ENCODE measurements at regions of chr5 and their contacts with region 1.

Region 1: DNA sequence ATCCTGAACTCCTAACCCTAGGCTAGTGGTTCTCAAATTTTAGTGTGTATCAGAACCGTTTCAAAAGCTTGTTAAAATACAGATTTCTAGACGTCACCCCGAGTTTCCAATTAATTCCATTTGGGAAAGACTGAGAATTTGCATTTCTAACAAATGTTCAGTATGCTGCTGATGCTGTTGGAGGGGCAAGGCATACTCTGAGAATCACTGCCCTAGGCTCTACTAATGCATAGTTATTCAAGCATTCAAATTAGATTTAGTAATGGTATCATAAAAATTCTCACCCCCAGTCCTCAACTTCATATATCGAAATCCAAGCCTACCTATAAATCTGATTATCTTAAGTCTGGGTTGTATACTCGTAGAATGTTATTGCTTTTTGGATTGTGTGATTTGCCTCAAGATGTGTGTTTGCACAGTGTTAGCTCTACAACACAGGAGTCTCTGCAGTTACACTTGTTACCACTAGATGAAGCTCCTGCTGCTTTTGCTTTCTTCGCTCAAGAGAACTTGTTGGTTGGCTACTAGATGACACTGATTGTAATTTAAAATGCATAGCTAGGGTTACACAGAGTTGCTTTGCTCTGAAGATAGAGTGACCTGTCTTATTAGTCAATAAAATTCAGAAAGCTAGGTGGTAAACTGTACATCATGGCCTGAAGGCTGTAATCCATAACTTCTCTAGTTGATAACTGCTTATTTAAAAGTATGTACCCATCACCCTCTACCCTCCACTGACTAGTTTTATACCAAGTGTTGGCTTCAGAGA is 7.5 kb upstream of the ERAP2 start:
- DNase-seq: peak; percentile 70
- H3K4me3 ChIP-seq: no peak overlapping the region
- H3K27ac ChIP-seq: no peak overlapping the region
- H3K4me1 ChIP-seq: no peaks in the 10 kb centered on the region
- H3K27me3 ChIP-seq: no peaks in the 10 kb centered on the region
- CTCF ChIP-seq: peak; percentile 80 to 88
- POLR2A ChIP-seq: no peak

Region 2: DNA sequence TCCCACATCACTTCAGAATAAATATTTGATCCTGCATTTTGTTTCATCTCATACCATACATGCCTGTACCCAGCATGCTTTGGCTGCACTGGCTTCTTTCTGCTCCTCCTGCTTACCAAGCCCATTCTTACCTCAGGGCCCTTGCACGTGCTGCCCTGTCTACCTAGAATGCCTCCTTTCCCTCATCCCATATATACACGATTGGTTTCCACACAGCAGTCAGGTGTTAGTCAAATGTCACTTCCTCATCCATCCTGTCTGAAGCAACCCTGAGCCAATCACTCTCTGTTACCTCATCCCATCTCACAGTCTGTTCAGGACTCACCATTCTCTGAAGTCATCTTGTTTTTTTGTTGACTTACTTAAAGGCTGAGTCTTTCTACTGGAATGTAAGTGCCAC is 176.3 kb before region 1 on chr5:
- CTCF ChIA-PET with region 1: no interaction called
- POLR2A ChIA-PET with region 1: no interaction called
- dilution Hi-C with region 1: no loop called
- intact Hi-C with region 1: no loop called
- DNase-seq: no peak
- H3K4me3 ChIP-seq: no peak overlapping the region
- H3K27ac ChIP-seq: no peak overlapping the region
- H3K4me1 ChIP-seq: peaks cover 9% of the 10 kb centered on the region
- H3K27me3 ChIP-seq: no peaks in the 10 kb centered on the region
- CTCF ChIP-seq: no peak
- POLR2A ChIP-seq: no peak

Region 3: GRCh38 chr5:96781031-96781937 is 87.5 kb before region 1 on chr5:
- CTCF ChIA-PET with region 1: no interaction called
- POLR2A ChIA-PET with region 1: no interaction called
- dilution Hi-C with region 1: no loop called
- intact Hi-C with region 1: no loop called
- DNase-seq: peak; percentile 53
- H3K4me3 ChIP-seq: no peak overlapping the region
- H3K27ac ChIP-seq: peak overlapping the region; percentile 63
- H3K4me1 ChIP-seq: peaks cover 19% of the 10 kb centered on the region
- H3K27me3 ChIP-seq: no peaks in the 10 kb centered on the region
- CTCF ChIP-seq: no peak
- POLR2A ChIP-seq: no peak

Region 4: DNA sequence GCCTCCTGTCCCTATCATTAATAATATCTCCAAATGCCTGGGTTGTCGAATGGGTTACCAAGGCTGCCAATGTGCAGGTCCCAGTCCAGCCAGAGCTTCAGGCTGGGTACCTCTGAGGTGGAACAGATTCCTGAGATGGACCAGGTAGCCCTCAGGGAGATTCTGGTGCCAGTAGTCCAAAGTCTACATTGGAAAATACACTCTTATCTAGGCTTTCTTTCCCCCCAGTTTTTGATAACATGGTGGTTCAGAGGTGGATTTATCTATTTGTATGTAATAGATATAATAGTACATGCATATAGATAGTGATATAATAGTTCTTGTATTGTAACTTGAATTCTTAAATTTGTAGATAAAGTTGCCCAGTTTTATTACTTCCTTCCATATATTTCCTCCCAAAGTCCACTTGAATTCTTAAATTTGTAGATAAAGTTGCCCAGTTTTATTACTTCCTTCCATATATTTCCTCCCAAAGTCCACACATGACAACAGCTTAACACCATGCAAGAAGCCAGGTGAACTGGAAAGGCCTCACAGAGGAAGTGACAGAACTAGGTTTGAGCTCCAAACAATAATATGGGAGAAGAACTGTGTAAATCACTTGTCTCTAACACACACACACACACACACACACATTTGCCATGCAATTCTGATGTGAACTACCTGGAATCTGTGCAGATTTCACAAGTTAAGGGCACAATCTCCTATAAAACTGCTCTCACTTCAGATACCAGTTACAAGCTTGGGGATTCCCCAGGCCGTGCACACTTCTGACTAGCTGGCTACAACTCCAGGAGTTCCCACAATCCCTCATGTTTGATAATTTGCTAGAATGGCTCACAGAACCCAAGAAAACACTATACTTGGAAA is 30.4 kb before region 1 on chr5:
- CTCF ChIA-PET with region 1: interaction called, 13 read pairs
- POLR2A ChIA-PET with region 1: no interaction called
- dilution Hi-C with region 1: no loop called
- intact Hi-C with region 1: no loop called
- DNase-seq: peak; percentile 62
- H3K4me3 ChIP-seq: no peak overlapping the region
- H3K27ac ChIP-seq: no peak overlapping the region
- H3K4me1 ChIP-seq: peaks cover 11% of the 10 kb centered on the region
- H3K27me3 ChIP-seq: no peaks in the 10 kb centered on the region
- CTCF ChIP-seq: no peak
- POLR2A ChIP-seq: no peak

Region 5: GRCh38 chr5:96893342-96893741 is 24.6 kb after region 1 on chr5:
- CTCF ChIA-PET with region 1: interaction called, 26 read pairs
- POLR2A ChIA-PET with region 1: no interaction called
- dilution Hi-C with region 1: no loop called
- intact Hi-C with region 1: no loop called
- DNase-seq: peak; percentile 68
- H3K4me3 ChIP-seq: no peak overlapping the region
- H3K27ac ChIP-seq: no peak overlapping the region
- H3K4me1 ChIP-seq: peaks cover 11% of the 10 kb centered on the region
- H3K27me3 ChIP-seq: no peaks in the 10 kb centered on the region
- CTCF ChIP-seq: no peak
- POLR2A ChIP-seq: no peak

Region 6: GRCh38 chr5:96934708-96935558 is 66.1 kb after region 1 on chr5:
- CTCF ChIA-PET with region 1: interaction called, 29 read pairs
- POLR2A ChIA-PET with region 1: no interaction called
- dilution Hi-C with region 1: no loop called
- intact Hi-C with region 1: loop called (anchors 1 kb)
- DNase-seq: peak; percentile 94
- H3K4me3 ChIP-seq: peak overlapping the region; percentile 30 to 97 (median 85)
- H3K27ac ChIP-seq: peak overlapping the region; percentile 82
- H3K4me1 ChIP-seq: peaks cover 21% of the 10 kb centered on the region
- H3K27me3 ChIP-seq: no peaks in the 10 kb centered on the region
- CTCF ChIP-seq: no peak
- POLR2A ChIP-seq: peak; percentile 95

Region 7: DNA sequence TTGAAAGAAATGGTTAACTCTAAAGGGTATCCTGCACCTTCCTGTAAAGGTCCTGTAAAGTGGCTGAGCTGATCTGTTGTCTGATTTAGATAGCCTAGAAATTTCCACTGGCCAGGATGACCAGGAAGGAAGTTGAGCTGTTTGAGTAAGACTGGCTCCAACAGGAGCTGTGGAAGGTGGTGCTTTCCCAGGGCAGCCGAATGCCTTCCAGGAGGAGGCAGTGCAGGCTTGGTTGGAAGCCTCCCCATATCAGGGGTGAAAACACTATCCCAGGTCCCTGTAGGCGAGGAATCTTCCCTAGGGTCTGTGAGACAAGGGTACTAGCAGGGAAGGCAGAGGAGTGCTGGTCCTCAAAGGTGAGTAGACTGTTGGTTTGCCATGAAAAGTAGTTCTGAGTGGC is 175.3 kb after region 1 on chr5:
- CTCF ChIA-PET with region 1: interaction called, 11 read pairs
- POLR2A ChIA-PET with region 1: no interaction called
- dilution Hi-C with region 1: no loop called
- intact Hi-C with region 1: no loop called
- DNase-seq: peak; percentile 66
- H3K4me3 ChIP-seq: no peak overlapping the region
- H3K27ac ChIP-seq: no peak overlapping the region
- H3K4me1 ChIP-seq: peaks cover 5% of the 10 kb centered on the region
- H3K27me3 ChIP-seq: peaks cover 2 to 15% of the 10 kb centered on the region in 2 experiments
- CTCF ChIP-seq: peak; percentile 28 to 55
- POLR2A ChIP-seq: no peak